Activated CD4-positive, alpha-beta memory T cell treated with anti-CD3 and anti-CD28 coated beads, Interleukin-2, amount 10 ng/mL, durations not matched to agents 7 days and 5 days (primary cell): ENCODE measurements at regions of chr9 and their contacts with region 1.

Region 1: GRCh38 chr9:131125128-131126058 is at the start of gene NUP214:
- DNase-seq: peak; percentile 100
- H3K4me3 Mint-ChIP-seq: peak within 1 kb of the TSS; percentile 95
- H3K27ac Mint-ChIP-seq: peak within 1 kb of the TSS; percentile 94
- H3K4me1 Mint-ChIP-seq: peaks cover 34% of the 10 kb centered on the region
- H3K27me3 Mint-ChIP-seq: no peaks in the 10 kb centered on the region
- total RNA-seq, gene NUP214: 43.8 to 51.3 TPM

Region 2: GRCh38 chr9:130986356-130986965 is 138.9 kb before region 1 on chr9:
- CTCF ChIA-PET with region 1: no interaction called
- POLR2A ChIA-PET with region 1: no interaction called
- DNase-seq: no peak
- H3K4me3 Mint-ChIP-seq: no peak overlapping the region
- H3K27ac Mint-ChIP-seq: no peak overlapping the region
- H3K4me1 Mint-ChIP-seq: no peaks in the 10 kb centered on the region
- H3K27me3 Mint-ChIP-seq: peaks cover 2% of the 10 kb centered on the region

Region 3: GRCh38 chr9:131111186-131111853 is 14.1 kb before region 1 on chr9:
- CTCF ChIA-PET with region 1: interaction called, 3 read pairs
- POLR2A ChIA-PET with region 1: interaction called, 10 read pairs
- DNase-seq: no peak
- H3K4me3 Mint-ChIP-seq: no peak overlapping the region
- H3K27ac Mint-ChIP-seq: no peak overlapping the region
- H3K4me1 Mint-ChIP-seq: no peaks in the 10 kb centered on the region
- H3K27me3 Mint-ChIP-seq: peaks cover 2% of the 10 kb centered on the region

Region 4: GRCh38 chr9:131253891-131254491 is 128.6 kb after region 1 on chr9:
- CTCF ChIA-PET with region 1: no interaction called
- POLR2A ChIA-PET with region 1: interaction called, 18 read pairs
- DNase-seq: no peak
- H3K4me3 Mint-ChIP-seq: no peak overlapping the region
- H3K27ac Mint-ChIP-seq: peak overlapping the region; percentile 98
- H3K4me1 Mint-ChIP-seq: peaks cover 68% of the 10 kb centered on the region
- H3K27me3 Mint-ChIP-seq: no peaks in the 10 kb centered on the region

Region 5: DNA sequence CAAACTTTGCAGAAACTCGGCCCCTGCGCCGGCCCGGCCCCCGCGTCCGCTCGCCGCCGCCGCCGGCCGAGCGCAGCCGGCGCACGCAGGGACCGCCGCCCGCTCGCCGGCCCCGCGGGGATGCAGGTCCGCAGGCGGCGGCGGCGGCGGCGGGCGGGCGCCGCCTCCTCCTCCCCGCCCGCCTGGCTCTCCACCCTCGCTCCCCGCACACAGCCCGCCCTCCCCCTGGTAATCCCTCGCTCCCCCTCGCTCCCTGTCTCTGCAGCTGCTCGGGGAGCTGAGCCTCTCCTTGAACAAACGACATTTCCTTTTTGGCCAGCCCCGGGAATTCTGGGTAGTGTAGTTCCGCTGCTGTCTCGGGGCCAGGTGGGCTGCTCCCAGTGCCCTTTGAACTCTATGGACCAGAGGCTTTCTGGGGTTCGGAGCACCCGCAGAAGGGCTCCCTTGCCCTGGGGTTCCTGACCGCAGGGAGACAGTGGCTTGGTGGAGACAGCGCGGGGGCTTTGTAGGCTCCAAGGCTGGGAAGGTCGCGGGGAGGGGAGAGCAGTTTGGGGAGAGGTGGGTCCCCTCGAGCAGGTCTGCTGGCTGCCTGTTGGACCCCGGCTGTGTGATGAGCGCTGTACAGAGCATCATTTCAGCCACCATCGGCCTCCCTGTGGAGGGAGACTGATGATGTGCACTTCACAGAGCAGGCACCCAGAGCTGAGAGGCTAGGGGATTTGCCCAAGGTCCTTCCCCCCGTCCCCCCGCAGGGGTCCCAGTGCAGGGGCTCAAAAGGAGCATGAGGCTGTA is 152.7 kb after region 1 on chr9:
- CTCF ChIA-PET with region 1: interaction called, 3 read pairs
- POLR2A ChIA-PET with region 1: interaction called, 13 read pairs
- DNase-seq: peak; percentile 82
- H3K4me3 Mint-ChIP-seq: peak overlapping the region; percentile 77
- H3K27ac Mint-ChIP-seq: peak overlapping the region; percentile 98
- H3K4me1 Mint-ChIP-seq: peaks cover 25% of the 10 kb centered on the region
- H3K27me3 Mint-ChIP-seq: peaks cover 16% of the 10 kb centered on the region